ENCODE measurements at regions of chr19 and their contacts with region 1.

Region 1: DNA sequence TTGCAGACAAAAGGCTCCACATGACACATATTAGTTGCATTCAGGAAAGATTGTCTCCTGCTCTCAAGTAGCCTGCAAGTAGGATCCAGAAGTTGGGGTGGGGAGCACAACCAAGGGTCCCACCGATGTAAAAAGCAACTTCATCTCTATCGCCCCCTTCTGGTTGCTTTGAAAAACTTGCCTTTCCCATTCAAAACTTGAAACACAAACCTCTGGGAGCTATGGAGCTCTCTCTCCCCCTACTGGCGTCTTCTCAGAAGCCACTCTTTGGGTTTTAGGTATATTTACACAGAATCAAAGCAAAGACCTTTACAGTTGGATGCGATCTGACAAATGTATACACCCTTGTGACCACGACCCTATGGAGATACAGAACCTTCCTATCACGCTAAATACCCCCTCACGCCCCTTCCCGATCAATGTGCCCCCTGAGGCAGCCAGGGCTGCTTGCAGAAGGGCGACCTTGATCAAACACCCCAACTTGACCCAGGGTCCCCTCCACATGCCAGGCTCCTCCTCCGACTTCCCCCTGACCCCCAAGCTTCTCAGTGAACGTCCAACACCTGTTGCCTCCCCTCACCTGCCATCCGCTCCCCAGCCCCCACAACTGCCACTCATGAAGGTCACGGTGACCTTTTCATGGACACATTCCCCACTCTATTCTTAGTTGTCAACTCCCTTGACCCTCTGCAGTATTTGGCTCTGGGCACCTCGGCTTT is 10.1 kb downstream of the NOSIP start:
- DNase-seq: peak; percentile 89
- ATAC-seq: peak; percentile 82
- H3K4me3 ChIP-seq: no peak overlapping the region
- H3K4me3 Mint-ChIP-seq: peak overlapping the region; percentile 40
- H3K27ac ChIP-seq: peak overlapping the region in 1 of 2 donors; percentile 16
- H3K27ac Mint-ChIP-seq: peak overlapping the region; percentile 71
- H3K4me1 ChIP-seq: peaks cover 12 to 37% of the 10 kb centered on the region in 2 donors
- H3K4me1 Mint-ChIP-seq: peaks cover 25% of the 10 kb centered on the region
- H3K27me3 ChIP-seq: no peaks in the 10 kb centered on the region
- H3K27me3 Mint-ChIP-seq: no peaks in the 10 kb centered on the region
- CTCF ChIP-seq: peak; percentile 100

Region 2: GRCh38 chr19:49473868-49474544 is 96.3 kb before region 1 on chr19 and contains the start of gene FLT3LG:
- CTCF ChIA-PET with region 1: interaction called, 34 read pairs
- POLR2A ChIA-PET with region 1: no interaction called
- intact Hi-C with region 1: loop called (anchors 1 kb)
- DNase-seq: peak; percentile 94
- ATAC-seq: peak; percentile 52
- H3K4me3 ChIP-seq: peak within 1 kb of the TSS in 4 of 5 experiments; percentile 53 to 98 (median 70)
- H3K4me3 Mint-ChIP-seq: peak within 1 kb of the TSS; percentile 93
- H3K27ac ChIP-seq: peak within 1 kb of the TSS; percentile 75 to 81
- H3K27ac Mint-ChIP-seq: peak within 1 kb of the TSS; percentile 97
- H3K4me1 ChIP-seq: peaks cover 43 to 73% of the 10 kb centered on the region in 2 donors
- H3K4me1 Mint-ChIP-seq: peaks cover 57% of the 10 kb centered on the region
- H3K27me3 ChIP-seq: no peaks in the 10 kb centered on the region
- H3K27me3 Mint-ChIP-seq: no peaks in the 10 kb centered on the region
- CTCF ChIP-seq: peak; percentile 89
- total RNA-seq, gene FLT3LG: 27.8 and 31.0 TPM in 2 replicates

Region 3: DNA sequence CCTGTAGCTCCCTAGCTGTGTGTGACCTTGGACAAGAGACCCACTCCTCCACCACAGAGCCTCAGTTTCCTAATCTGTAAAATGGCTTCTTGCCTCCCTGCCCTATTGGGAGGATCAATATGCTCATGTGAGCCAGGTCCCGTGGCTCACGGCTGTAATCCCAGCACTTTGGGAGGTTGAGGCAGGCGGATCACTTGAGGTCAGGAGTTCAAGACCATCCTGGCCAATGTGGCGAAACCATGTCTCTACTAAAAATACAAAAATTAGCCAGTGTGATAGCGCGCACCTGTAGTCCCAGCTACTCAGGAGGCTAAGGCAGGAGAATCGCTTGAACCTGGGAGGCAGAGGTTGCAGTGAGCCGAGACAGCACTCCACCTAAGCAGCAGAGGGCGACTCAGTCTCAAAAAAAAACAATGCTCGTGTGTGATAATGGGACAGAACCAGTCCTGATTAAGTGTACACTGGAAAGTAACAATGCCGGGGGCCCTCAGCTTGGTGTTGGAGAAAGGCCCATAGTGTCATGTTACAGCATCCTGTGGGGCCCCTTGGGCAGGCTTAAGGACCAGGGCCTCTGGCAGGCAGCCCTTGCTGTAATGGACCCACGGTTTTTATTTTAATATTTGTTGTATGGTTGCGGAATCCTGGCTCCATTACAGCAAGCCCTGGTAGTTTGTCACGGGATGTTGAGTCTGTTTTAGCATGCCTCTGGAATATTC is 67.3 kb before region 1 on chr19:
- CTCF ChIA-PET with region 1: interaction called, 6 read pairs
- POLR2A ChIA-PET with region 1: interaction called, 3 read pairs
- intact Hi-C with region 1: loop called (anchors 1 kb)
- DNase-seq: peak; percentile 72
- ATAC-seq: no peak
- H3K4me3 ChIP-seq: no peak overlapping the region
- H3K4me3 Mint-ChIP-seq: no peak overlapping the region
- H3K27ac ChIP-seq: peak overlapping the region; percentile 89 to 98
- H3K27ac Mint-ChIP-seq: peak overlapping the region; percentile 99
- H3K4me1 ChIP-seq: peaks cover 31 to 55% of the 10 kb centered on the region in 2 donors
- H3K4me1 Mint-ChIP-seq: peaks cover 51% of the 10 kb centered on the region
- H3K27me3 ChIP-seq: no peaks in the 10 kb centered on the region
- H3K27me3 Mint-ChIP-seq: no peaks in the 10 kb centered on the region
- CTCF ChIP-seq: peak; percentile 70

Region 4: DNA sequence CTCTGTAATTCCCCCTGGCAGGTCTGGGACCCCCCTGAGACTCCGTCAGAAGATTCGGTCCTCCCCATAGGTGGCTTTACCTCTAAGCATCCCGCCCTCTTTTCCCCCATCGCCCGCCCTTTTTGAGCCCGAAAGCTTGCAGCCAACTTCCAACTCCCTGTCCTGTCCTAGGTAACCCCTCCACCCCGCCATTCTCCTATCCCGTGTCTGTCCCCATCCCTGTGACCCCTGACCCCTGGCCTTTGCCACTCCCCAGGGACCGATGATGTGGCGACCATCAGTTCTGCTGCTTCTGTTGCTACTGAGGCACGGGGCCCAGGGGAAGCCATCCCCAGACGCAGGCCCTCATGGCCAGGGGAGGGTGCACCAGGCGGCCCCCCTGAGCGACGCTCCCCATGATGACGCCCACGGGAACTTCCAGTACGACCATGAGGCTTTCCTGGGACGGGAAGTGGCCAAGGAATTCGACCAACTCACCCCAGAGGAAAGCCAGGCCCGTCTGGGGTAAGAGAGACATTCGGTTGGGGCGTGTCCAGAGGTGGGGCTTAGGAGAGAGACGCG is 42.0 kb before region 1 on chr19:
- CTCF ChIA-PET with region 1: no interaction called
- POLR2A ChIA-PET with region 1: interaction called, 11 read pairs
- intact Hi-C with region 1: no loop called
- DNase-seq: no peak
- ATAC-seq: no peak
- H3K4me3 ChIP-seq: peak overlapping the region in 4 of 5 experiments; percentile 33 to 49 (median 44)
- H3K4me3 Mint-ChIP-seq: peak overlapping the region; percentile 84
- H3K27ac ChIP-seq: no peak overlapping the region
- H3K27ac Mint-ChIP-seq: no peak overlapping the region
- H3K4me1 ChIP-seq: peaks cover 3 to 16% of the 10 kb centered on the region in 2 donors
- H3K4me1 Mint-ChIP-seq: peaks cover 18% of the 10 kb centered on the region
- H3K27me3 ChIP-seq: peaks cover 0 to 3% (median under 1%) of the 10 kb centered on the region in 4 experiments
- H3K27me3 Mint-ChIP-seq: no peaks in the 10 kb centered on the region
- CTCF ChIP-seq: no peak

Region 5: GRCh38 chr19:49580264-49581006 is 10.1 kb after region 1 on chr19 and contains the start of gene NOSIP:
- CTCF ChIA-PET with region 1: interaction called, 28 read pairs
- POLR2A ChIA-PET with region 1: interaction called, 8 read pairs
- intact Hi-C with region 1: no loop called
- DNase-seq: peak; percentile 97
- ATAC-seq: peak; percentile 95
- H3K4me3 ChIP-seq: peak within 1 kb of the TSS; percentile 61 to 92 (median 87)
- H3K4me3 Mint-ChIP-seq: peak within 1 kb of the TSS; percentile 89
- H3K27ac ChIP-seq: peak within 1 kb of the TSS; percentile 5 to 74
- H3K27ac Mint-ChIP-seq: peak within 1 kb of the TSS; percentile 88
- H3K4me1 ChIP-seq: peaks cover 16 to 23% of the 10 kb centered on the region in 2 donors
- H3K4me1 Mint-ChIP-seq: peaks cover 29% of the 10 kb centered on the region
- H3K27me3 ChIP-seq: no peaks in the 10 kb centered on the region
- H3K27me3 Mint-ChIP-seq: no peaks in the 10 kb centered on the region
- CTCF ChIP-seq: no peak
- total RNA-seq, gene NOSIP: 55.5 and 65.2 TPM in 2 replicates

Measured in B cell (primary cell).